Posterior cingulate gyrus (tissue), 11 donors: ENCODE measurements at regions of chr1 and their contacts with region 1.

Region 1: DNA sequence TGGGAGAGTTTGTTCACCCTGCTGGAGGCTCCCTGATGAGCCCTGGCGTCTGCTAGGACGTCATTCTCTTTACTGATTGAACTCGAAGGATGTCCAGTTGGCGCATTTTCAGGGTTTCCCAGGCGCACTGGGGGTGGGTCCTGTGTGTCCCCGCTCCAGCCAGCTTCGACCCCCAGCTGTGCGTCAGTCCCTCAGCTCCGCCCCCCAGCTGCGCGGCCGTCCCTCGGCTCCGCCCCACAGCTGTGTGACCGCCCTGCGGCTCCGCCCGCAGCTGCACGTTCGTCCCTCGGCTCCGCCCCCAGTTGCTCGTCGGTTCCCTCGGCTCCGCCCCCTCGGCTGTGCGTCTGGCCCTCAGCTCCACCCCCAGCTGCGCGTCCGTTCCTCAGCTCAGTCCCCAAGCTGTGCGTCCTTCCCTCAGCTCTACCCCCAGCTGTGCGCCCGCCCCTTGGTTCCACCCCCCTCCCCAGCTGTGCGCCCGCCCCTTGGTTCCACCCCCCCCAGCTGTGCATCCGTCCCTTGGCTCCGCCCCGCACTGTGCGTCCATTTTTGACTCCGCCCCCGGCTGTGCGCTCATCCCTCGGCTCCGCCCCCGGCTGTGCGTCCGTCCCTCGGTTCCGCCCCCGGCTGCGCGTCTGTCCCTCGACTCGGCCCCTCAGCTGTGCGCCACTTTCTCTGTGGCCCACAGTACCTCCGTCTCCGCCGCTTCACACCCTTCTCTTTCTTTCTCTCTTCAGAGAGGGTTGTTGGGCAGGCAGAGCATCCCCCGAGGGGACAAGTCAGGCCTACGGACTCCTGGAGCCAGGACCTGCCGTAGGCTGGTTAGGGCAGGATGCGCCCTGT is 61.3 kb downstream of the FAAP20 start:
- DNase-seq: peak; percentile 90 to 100 (median 96)

Region 2: GRCh38 chr1:1291548-1292441 is 841.5 kb before region 1 on chr1:
- intact Hi-C with region 1: loop called (anchors 10 kb)
- DNase-seq: peak in 8 of 10 donors; percentile 45 to 94 (median 68)

Region 3: DNA sequence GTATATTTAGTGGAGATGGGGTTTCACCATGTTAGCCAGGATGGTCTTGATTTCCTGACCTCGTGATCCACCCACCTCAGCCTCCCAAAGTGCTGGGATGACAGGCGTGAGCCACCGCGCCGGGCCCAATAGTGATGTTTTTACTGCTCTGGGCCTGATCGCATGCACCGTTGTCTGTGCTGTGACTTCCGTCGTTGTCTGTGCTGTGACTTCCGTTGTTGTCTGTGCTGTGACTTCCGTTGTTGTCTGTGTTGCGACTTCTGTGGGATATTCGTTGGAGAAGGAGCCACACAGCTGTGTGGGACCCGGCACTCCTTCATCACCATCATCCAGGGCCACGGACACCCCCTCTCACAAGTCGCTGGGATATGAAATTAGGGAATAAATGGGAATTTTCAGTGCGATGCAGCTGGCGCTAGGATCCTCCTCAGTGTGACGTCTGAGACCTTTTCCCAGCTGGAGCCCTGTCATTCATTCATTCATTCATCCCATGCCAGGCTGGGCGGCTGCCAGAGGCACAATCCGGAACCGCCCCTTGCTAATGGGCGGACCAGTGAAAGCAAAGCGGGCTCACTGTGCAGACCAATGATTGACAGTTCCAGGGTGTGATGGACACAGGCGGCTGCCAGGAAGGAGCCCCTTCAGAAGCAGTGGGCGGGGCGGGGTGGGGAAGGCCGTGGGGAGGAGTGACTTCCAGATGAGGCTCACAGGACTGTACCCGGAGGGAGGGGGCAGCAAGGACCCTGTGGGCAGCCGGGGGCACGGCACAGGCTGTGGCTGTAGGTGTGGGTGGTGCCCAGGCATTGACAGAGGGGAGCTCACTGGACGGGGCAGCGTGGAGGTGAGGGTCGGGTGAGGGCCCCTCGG is 34.2 kb before region 1 on chr1:
- intact Hi-C with region 1: loop called (anchors 5 kb)
- DNase-seq: peak; percentile 71 to 98 (median 86)

Region 4: DNA sequence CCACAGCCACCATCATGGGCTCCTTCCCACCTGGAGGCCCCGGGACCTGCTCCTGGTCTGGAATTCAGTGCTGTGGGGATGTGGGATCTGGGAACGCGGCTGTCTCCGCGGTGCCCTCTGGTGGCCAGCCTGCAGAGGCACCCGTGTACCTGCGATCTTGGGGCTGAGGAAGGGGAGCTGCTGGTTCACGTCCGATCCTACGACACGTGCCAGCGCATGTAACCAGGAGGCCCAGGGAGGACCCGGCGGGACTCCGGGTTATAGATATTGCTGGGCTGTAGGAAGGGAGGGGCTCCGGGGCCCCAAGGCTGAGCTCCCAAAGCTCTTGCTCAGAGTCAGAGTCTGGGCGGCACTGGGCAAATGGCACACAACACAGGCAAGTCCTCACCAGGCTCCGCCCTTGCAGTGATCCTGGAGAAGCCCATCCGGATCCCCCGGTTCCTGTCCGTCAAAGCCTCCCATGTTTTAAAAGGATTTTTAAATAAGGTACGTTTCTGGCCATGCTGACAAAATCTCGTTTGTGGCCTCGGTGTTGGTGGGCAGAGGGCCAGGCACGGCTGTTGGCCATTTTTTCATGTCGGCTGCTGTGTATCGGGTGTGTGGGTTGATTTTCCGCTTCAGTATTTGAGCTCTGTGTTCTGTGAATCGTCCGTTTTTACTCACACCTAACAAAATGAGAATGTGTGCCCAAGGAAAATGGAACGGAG is 41.2 kb after region 1 on chr1:
- intact Hi-C with region 1: loop called (anchors 5 kb)
- DNase-seq: peak in 9 of 10 donors; percentile 34 to 95 (median 66)

Region 5: GRCh38 chr1:2189459-2190425 is 56.5 kb after region 1 on chr1:
- intact Hi-C with region 1: no loop called
- DNase-seq: peak; percentile 88 to 99 (median 94)